ENCODE measurements at regions of chr6 and their contacts with region 1.

Region 1: GRCh38 chr6:21593412-21593926 is at the start of gene SOX4:
- DNase-seq: peak; percentile 88
- CTCF ChIP-seq: no peak

Region 2: GRCh38 chr6:20564269-20564668 is 1029.2 kb before region 1 on chr6:
- in situ Hi-C with region 1: loop called (anchors 10 kb)
- DNase-seq: peak; percentile 36
- CTCF ChIP-seq: no peak

Region 3: DNA sequence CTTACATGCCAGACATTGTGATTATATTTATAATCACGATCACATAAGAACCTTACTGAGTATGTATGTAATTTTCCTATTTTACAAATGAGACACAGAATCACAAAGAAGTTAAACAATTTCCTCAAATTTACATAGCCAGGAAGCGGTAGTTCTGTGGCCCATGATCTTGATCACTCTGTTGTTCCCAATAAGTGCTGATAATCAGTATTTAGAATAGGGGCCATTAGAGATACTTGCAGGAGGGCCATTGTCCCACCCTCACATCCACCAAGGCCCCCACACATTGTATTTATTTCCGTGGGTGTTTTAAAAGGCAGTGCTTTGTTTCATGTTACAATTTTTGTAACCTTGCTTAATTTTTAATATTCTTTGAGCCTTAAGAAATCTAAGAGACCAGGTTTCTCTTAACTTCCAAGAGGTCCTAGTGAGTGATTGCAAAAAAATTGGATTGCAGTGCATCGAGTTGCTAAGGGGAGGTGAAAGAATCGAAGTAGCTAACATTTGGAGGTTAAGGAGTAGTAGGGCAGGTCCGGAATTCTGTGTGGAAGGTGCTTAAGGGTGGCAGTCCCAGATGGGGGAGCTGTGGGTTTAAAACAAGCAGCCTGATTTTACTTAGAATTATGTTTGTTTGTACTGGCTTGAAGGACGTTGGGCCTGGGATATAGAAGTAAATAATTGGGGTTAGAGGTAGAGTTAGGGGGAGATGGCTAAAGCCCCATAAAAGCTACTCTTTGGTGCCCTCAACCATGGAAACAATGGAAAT is 719.9 kb before region 1 on chr6:
- in situ Hi-C with region 1: loop called (anchors 25 kb)
- DNase-seq: no peak
- CTCF ChIP-seq: no peak

Region 4: DNA sequence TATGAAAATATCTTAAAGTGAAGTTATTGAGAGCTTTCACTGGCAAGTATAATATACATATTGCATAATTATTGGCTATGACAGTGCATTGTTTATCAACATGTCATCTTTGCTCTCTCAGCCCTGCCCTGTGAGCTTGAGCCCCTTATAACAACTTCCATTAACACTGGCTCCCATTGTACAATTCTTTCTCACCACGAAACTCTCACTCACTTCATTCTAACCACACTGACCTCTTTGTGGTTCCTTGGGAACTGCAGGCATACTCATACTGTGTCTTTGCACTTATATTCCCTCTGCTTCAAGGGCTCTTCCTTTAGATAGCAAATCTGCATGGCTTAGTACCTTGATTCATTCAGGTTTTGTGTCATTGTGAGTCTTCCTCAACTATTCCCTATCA is 647.4 kb before region 1 on chr6:
- in situ Hi-C with region 1: loop called (anchors 25 kb)
- DNase-seq: peak; percentile 40
- CTCF ChIP-seq: no peak

Region 5: DNA sequence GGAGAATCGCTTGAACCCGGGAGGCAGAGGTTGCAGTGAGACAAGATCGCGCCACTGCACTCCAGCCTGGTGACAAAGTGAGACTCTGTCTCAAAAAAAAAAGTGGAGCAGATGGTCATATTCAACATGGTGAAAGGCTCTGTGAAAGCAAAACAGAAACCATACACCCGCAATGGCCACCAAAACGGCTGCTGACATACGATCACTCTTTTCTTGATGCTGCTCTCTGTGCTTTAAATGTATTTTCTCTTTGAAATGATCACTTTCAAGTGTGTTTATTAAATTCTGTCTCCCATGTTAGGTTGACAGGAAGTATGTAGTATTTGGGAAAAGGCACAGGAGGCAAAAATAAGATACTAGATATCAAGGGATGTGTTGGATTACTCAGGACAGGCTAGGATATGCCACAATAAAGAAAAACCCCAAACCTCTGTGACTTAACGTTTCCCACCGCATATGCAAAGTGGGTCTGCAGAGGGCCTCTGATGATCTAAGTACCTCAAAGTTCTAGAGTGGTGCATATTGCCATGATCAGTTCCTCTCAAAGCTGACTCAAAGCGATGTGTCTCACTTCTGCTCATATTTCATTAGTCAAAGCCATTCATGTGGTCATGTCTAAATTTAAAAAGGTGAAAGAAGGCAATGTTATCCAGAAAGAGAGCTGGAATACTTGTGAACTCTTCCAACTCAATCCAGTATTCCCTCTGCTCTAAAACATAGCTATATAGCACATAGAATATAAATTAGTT is 155.1 kb before region 1 on chr6:
- in situ Hi-C with region 1: no loop called
- DNase-seq: peak; percentile 82
- CTCF ChIP-seq: no peak